Activated CD4-positive, alpha-beta T cell treated with anti-CD3 and anti-CD28 coated beads for 36 hours (primary cell): ENCODE measurements at regions of chr12 and their contacts with region 1.

Region 1: GRCh38 chr12:9039397-9039977 is 50.1 kb downstream of the KLRG1 start:
- DNase-seq: no peak
- ATAC-seq: peak; percentile 78
- H3K4me3 Mint-ChIP-seq: no peak overlapping the region
- H3K27ac Mint-ChIP-seq: no peak overlapping the region
- H3K4me1 Mint-ChIP-seq: peaks cover 48% of the 10 kb centered on the region
- H3K27me3 Mint-ChIP-seq: no peaks in the 10 kb centered on the region

Region 2: DNA sequence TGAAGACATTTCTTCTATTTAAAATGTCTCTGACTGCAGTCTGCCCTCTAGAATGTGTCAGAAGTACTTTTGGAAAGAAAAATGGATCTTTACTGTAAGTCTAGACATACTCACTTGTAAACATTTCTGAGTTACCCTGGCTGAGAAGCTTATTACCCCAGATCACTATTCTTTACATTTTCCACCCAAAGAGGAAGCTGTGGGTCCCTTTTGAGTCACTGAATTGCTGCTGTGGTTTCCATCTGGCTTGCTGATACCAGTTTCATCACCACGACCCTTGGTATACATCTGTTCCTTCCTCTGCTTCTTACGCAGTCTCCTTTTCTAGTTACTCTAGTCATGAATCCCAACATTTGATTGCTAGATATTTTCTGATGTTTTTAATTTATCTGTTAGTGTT is 546.4 kb before region 1 on chr12:
- CTCF ChIA-PET with region 1: no interaction called
- POLR2A ChIA-PET with region 1: no interaction called
- intact Hi-C with region 1: loop called in 1 of 2 experiments (anchors 5 kb)
- DNase-seq: peak; percentile 71
- ATAC-seq: peak; percentile 93
- H3K4me3 Mint-ChIP-seq: no peak overlapping the region
- H3K27ac Mint-ChIP-seq: peak overlapping the region; percentile 51
- H3K4me1 Mint-ChIP-seq: peaks cover 24% of the 10 kb centered on the region
- H3K27me3 Mint-ChIP-seq: peaks cover 13% of the 10 kb centered on the region

Region 3: DNA sequence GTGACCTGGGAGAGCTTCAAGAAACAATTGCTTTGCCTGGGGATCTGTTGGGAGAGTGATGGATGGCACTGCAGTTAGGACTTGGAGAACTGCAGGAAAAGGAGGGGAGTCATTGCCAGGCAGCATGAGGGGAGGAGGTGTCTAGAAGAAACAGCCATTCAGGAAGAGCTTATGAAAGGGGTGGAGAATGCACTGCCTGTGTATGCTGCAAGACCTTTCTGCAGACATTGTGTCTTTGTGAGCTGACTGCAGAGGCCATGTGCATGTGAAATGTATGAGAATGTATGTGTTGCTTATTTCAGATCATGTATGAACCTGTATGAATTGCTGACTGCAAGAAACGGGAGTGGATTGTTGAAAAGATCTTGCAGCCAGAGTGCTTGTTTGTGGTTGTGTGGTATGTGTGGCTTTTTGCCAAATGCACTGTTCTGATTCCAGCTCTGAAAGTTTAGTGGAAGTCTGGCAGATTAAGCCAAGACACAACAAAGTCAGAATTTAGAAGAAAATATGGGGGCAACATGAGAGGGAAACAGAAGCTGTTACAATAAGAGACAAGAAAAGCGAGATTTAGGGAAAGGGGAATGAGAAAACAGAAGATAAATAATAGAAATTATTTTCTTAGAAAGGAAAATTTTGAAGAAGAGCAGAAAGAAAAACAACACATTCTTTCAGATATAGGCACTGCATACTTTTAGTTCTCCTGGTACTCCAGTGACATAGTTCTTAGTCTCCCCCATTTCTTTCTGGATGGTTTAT is 351.5 kb before region 1 on chr12:
- CTCF ChIA-PET with region 1: interaction called, 5 read pairs
- POLR2A ChIA-PET with region 1: no interaction called
- intact Hi-C with region 1: loop called in 1 of 2 experiments (anchors 2 kb)
- DNase-seq: no peak
- ATAC-seq: peak; percentile 39
- H3K4me3 Mint-ChIP-seq: no peak overlapping the region
- H3K27ac Mint-ChIP-seq: no peak overlapping the region
- H3K4me1 Mint-ChIP-seq: peaks cover 3% of the 10 kb centered on the region
- H3K27me3 Mint-ChIP-seq: no peaks in the 10 kb centered on the region

Region 4: DNA sequence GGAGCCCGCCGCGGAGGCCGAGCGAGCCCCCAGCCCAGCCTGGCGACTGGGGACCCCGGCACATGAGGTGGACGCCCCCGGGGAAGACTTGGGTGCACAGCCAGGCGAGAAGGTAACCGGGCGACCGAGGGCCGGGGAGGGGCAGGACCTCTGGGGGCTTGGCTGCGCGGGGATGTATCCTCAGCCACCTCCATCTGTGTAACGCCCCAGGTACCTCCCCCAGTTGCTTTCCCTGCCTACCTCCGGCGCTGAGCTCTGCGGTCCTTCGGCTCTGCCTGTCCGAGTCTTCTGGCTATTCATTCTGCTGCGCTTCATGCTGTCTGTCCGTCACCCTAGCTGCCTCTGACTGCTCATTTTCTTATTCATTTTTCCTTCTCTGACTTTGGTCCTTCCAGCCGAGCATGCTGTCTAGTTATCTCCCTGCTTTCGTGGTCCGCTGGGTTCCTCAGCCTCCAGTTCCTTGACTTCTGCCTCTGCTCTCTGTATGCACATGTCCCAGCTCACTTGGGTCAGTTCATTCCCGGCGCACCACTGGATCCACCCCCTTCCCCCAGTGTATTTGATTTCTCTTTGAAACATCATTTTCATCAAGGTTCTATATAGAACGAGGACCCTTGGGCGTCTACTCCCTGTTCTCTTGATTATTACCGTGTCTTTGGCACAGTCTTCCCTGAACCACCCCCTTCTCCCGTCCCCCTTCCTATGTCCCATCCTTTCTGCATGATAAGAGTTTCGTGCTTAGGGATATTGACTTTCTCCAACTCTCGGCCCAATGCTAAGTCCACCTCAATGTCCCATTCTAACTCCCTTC is 124.6 kb before region 1 on chr12:
- CTCF ChIA-PET with region 1: interaction called, 16 read pairs
- POLR2A ChIA-PET with region 1: no interaction called
- intact Hi-C with region 1: loop called (anchors 2 kb)
- DNase-seq: peak; percentile 69
- ATAC-seq: peak; percentile 82
- H3K4me3 Mint-ChIP-seq: no peak overlapping the region
- H3K27ac Mint-ChIP-seq: no peak overlapping the region
- H3K4me1 Mint-ChIP-seq: peaks cover 12% of the 10 kb centered on the region
- H3K27me3 Mint-ChIP-seq: no peaks in the 10 kb centered on the region

Region 5: DNA sequence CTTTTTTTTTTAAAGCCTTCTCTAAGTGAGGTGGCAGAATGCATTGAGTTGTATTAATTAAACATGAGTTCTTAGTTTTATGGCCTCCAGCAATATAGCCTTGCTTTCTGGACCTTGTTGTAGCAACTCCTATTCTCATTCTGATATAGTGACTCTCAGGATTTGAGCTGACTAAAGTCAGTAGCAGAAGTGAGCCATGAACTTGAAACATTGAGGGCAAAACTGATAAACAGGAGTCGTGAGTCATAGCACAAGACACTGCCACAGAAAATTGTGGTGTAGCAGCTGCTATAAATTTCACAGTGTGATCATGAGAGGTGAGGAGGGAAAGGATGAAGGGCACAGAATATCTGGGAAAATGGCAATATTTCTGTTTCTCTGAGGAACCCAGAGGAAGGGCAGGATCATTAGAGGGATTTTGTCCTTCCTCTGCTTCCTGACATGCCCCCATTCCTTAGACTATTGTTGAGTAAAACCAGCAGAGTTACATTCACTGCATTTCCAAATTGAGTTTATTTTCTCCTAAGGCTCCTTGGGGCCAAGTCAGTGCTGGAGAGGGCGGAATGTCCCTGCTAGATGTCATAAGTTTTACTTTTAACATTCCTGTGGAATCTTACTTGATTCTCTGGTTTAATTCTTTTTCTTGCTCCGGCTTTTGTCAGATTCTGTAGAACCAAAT is 42.7 kb before region 1 on chr12:
- CTCF ChIA-PET with region 1: interaction called, 9 read pairs
- POLR2A ChIA-PET with region 1: no interaction called
- intact Hi-C with region 1: loop called in 1 of 2 experiments (anchors 5 kb)
- DNase-seq: peak; percentile 52
- ATAC-seq: peak; percentile 93
- H3K4me3 Mint-ChIP-seq: no peak overlapping the region
- H3K27ac Mint-ChIP-seq: no peak overlapping the region
- H3K4me1 Mint-ChIP-seq: peaks cover 62% of the 10 kb centered on the region
- H3K27me3 Mint-ChIP-seq: peaks cover 9% of the 10 kb centered on the region

Region 6: GRCh38 chr12:9079883-9080675 is 40.6 kb after region 1 on chr12:
- CTCF ChIA-PET with region 1: no interaction called
- POLR2A ChIA-PET with region 1: no interaction called
- intact Hi-C with region 1: no loop called
- DNase-seq: no peak
- ATAC-seq: no peak
- H3K4me3 Mint-ChIP-seq: no peak overlapping the region
- H3K27ac Mint-ChIP-seq: no peak overlapping the region
- H3K4me1 Mint-ChIP-seq: no peaks in the 10 kb centered on the region
- H3K27me3 Mint-ChIP-seq: no peaks in the 10 kb centered on the region